ENCODE measurements at regions of chr17 and their contacts with region 1.

Region 1: GRCh38 chr17:77494664-77495435 is 354.1 kb downstream of the SEC14L1 start:
- DNase-seq: peak; percentile 64 to 81 (median 72)
- H3K4me3 ChIP-seq: no peak overlapping the region
- H3K4me3 Mint-ChIP-seq: peak overlapping the region in 1 of 7 donors; percentile 12
- H3K27ac ChIP-seq: no peak overlapping the region
- H3K27ac Mint-ChIP-seq: peak overlapping the region; percentile 75 to 96 (median 86)
- H3K4me1 ChIP-seq: peaks cover 17% of the 10 kb centered on the region
- H3K4me1 Mint-ChIP-seq: peaks cover 19 to 40% (median 24%) of the 10 kb centered on the region in 3 donors
- H3K27me3 ChIP-seq: no peaks in the 10 kb centered on the region
- H3K27me3 Mint-ChIP-seq: no peaks in the 10 kb centered on the region

Region 2: DNA sequence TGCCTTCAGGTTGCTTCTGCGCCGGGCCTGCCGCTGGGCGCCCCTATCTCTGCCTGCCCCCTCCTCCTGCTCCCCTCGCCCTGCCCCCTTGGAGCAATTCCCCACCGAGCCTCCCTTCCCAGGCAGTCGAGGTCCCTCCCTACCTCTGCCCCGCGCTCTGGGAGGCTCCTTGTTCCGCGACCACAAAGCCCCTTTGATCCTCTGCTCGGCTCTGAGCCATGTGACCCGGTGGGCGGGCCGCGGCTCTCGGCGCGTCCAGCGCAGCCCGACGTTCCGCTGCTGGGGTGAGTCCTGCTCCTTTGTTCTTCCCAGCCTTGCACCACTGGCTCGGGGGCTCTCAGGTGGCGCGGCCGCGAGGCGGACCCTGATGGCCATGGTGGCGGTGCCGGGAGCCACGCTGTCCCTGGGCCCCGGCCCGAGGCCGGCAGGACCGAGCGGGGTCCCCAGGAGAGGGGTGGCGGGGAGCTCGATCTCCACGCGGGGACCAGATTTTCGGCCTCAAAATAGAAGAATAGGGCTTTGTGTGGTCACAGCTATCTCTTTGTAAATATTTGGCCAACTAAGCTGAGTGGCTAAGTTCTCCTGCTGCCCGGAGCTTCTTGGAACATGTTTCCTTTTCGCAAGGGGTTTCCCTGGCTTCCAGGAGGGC is 43.5 kb before region 1 on chr17:
- CTCF ChIA-PET with region 1: interaction called, 10 read pairs
- POLR2A ChIA-PET with region 1: interaction called, 7 read pairs
- DNase-seq: peak; percentile 60 to 80 (median 71)
- H3K4me3 ChIP-seq: peak overlapping the region; percentile 95
- H3K4me3 Mint-ChIP-seq: peak overlapping the region; percentile 89 to 99 (median 98)
- H3K27ac ChIP-seq: peak overlapping the region; percentile 77
- H3K27ac Mint-ChIP-seq: peak overlapping the region; percentile 85 to 100 (median 97)
- H3K4me1 ChIP-seq: peaks cover 57% of the 10 kb centered on the region
- H3K4me1 Mint-ChIP-seq: peaks cover 50 to 61% (median 59%) of the 10 kb centered on the region in 3 donors
- H3K27me3 ChIP-seq: no peaks in the 10 kb centered on the region
- H3K27me3 Mint-ChIP-seq: no peaks in the 10 kb centered on the region

Region 3: GRCh38 chr17:77465358-77466041 is 29.4 kb before region 1 on chr17:
- CTCF ChIA-PET with region 1: interaction called, 11 read pairs
- POLR2A ChIA-PET with region 1: no interaction called
- DNase-seq: peak; percentile 56 to 88 (median 81)
- H3K4me3 ChIP-seq: peak overlapping the region; percentile 59
- H3K4me3 Mint-ChIP-seq: peak overlapping the region; percentile 41 to 90 (median 84)
- H3K27ac ChIP-seq: peak overlapping the region; percentile 27
- H3K27ac Mint-ChIP-seq: peak overlapping the region; percentile 81 to 98 (median 93)
- H3K4me1 ChIP-seq: peaks cover 93% of the 10 kb centered on the region
- H3K4me1 Mint-ChIP-seq: peaks cover 78 to 97% (median 88%) of the 10 kb centered on the region in 3 donors
- H3K27me3 ChIP-seq: no peaks in the 10 kb centered on the region
- H3K27me3 Mint-ChIP-seq: peaks cover 0 to 6% of the 10 kb centered on the region in 2 donors

Region 4: DNA sequence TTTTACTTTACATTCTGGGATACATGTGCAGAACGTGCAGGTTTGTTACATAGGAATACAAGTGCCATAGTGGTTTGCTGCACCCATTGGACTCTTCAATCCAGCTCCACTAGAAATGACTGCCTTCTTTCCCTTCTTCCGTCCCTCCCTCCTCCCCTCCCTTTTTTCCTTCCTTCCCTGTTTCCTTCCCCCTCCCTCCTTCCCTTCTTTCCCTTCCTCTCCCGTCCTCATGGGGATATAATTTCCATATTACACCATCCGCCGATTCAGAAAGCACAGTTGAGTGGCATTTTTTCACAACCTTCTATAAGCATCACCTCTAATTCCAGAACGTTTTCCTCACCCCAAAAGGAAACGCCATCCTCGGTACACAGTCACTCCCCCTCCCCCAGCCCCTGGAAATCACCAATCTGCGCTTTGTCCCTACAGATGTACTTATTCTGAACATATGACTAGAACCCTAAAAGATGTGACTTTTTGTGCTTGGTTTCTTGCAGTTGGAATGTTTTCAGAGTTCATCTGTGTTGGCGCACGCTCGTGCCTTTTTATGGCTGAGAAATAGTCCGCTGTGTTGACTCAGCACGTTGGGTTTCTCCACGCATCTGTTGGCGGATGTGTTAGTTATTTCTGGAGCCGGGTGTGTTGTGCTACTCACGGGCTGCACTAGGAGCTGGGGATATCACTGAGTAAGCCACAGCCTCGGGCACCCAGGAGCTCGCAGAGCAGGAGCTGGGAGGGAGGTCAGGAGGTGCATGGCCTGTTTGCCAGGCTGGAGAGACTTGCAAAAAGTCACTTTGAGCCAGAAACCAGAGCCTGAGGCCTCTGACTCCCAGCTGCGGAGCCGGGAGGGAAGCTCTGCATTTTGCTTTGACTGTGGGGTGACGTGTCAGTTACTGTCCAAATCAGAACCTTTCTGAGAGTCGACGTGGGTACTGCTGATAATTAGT is 17.6 kb before region 1 on chr17:
- CTCF ChIA-PET with region 1: interaction called, 13 read pairs
- POLR2A ChIA-PET with region 1: no interaction called
- DNase-seq: peak in 2 of 5 donors; percentile 26 to 47
- H3K4me3 ChIP-seq: no peak overlapping the region
- H3K4me3 Mint-ChIP-seq: peak overlapping the region; percentile 13 to 92 (median 50)
- H3K27ac ChIP-seq: no peak overlapping the region
- H3K27ac Mint-ChIP-seq: peak overlapping the region; percentile 76 to 94 (median 88)
- H3K4me1 ChIP-seq: peaks cover 86% of the 10 kb centered on the region
- H3K4me1 Mint-ChIP-seq: peaks cover 71 to 89% (median 76%) of the 10 kb centered on the region in 3 donors
- H3K27me3 ChIP-seq: no peaks in the 10 kb centered on the region
- H3K27me3 Mint-ChIP-seq: no peaks in the 10 kb centered on the region

Measured in CD8-positive, alpha-beta memory T cell (primary cell).